ENCODE measurements at regions of chr19 and their contacts with region 1.

Region 1: GRCh38 chr19:46009530-46010510 is 13.0 kb downstream of the PGLYRP1 start:
- DNase-seq: peak; percentile 72 to 83 (median 80)
- ATAC-seq: peak; percentile 97
- H3K4me3 ChIP-seq: no peak overlapping the region
- H3K27ac ChIP-seq: no peak overlapping the region
- H3K4me1 ChIP-seq: peaks cover 3 to 12% of the 10 kb centered on the region in 2 experiments; a peak in 2 of 5 replicates
- H3K27me3 ChIP-seq: no peaks in the 10 kb centered on the region
- CTCF ChIP-seq: peak; percentile 79 to 90 (median 82)
- EP300 ChIP-seq: no peak
- POLR2A ChIP-seq: no peak
- RAD21 ChIP-seq: peak in 1 of 2 experiments; percentile 54; a peak in 2 of 4 replicates

Region 2: DNA sequence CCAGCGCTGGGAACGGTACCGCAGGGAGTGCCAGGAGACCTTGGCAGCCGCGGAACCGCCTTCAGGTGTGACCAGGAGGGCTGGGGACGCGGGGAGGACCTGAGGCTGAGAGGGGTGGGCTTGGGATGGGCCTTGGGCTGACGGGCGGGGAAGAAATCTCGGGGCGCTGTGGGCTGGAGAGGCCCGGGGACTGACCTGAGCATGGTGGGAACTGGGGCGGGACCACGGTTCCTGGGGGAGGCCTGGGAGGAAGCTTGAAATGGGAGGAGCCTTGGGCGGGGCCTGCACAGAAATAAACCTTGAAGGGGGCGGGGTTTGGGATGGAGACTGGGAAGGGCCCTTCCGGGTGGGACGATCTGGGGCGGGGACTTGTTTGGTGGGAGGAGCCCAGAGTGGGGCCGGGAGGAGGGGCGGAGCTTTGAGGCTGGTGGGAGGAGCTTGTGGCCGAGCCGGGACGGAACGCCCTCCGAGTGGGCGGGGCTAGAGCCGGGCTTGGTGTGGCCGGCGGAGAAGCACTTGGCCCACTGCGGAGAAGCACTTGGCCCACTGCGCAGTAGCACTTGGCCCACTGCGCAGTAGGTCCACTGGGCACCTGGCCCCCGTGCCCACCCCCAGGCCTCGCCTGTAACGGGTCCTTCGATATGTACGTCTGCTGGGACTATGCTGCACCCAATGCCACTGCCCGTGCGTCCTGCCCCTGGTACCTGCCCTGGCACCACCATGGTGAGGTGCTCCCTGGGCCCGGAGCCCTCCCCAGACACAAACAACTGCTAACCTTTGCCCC is 339.0 kb before region 1 on chr19:
- CTCF ChIA-PET with region 1: no interaction called
- POLR2A ChIA-PET with region 1: no interaction called
- in situ Hi-C with region 1: no loop called
- intact Hi-C with region 1: no loop called
- DNase-seq: peak; percentile 98 to 100 (median 100)
- ATAC-seq: peak; percentile 84
- H3K4me3 ChIP-seq: peak overlapping the region; percentile 58
- H3K27ac ChIP-seq: peak overlapping the region; percentile 92; the same call in 2 of the 3 replicates
- H3K4me1 ChIP-seq: peaks cover 16 to 40% of the 10 kb centered on the region in 2 experiments; a peak in 4 of 5 replicates
- H3K27me3 ChIP-seq: no peaks in the 10 kb centered on the region
- CTCF ChIP-seq: no peak
- EP300 ChIP-seq: no peak
- POLR2A ChIP-seq: no peak; the same call in 1 of the 2 replicates
- RAD21 ChIP-seq: no peak

Region 3: GRCh38 chr19:45809643-45810159 is 200.1 kb before region 1 on chr19:
- CTCF ChIA-PET with region 1: no interaction called
- POLR2A ChIA-PET with region 1: no interaction called
- in situ Hi-C with region 1: loop called (anchors 10 kb)
- intact Hi-C with region 1: no loop called
- DNase-seq: peak; percentile 48 to 71 (median 52)
- ATAC-seq: peak; percentile 72
- H3K4me3 ChIP-seq: no peak overlapping the region
- H3K27ac ChIP-seq: peak overlapping the region; percentile 96
- H3K4me1 ChIP-seq: peaks cover 13 to 18% of the 10 kb centered on the region in 2 experiments; a peak in 4 of 5 replicates
- H3K27me3 ChIP-seq: no peaks in the 10 kb centered on the region
- CTCF ChIP-seq: no peak
- EP300 ChIP-seq: peak; percentile 57
- POLR2A ChIP-seq: no peak
- RAD21 ChIP-seq: no peak

Region 4: DNA sequence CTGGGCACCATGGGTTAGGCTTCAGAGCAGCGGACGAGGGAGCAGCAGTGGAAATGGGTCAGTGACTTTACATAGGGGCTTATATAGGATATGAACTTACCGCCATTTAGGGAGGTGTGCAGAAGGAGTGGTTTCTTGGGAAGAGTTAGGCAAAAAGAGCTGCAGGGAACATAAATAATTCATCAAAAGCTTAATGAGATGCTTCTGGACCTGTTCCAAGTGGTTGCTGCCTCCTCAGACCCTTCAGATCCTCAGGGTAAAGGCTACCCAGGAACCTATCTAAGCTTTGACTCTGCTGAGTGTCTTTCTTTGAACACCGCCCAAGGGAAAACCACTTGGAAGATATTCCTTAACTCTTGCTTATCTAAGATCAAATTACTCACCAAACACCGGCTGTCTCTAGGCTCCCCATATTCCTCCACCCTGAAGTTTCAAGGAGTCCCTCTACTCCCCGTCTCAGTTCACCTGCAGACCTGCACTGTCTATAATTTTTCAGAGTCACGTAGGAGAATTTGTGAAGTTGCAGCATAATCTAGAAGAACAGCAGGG is 31.2 kb after region 1 on chr19 and contains the start of gene IGFL4:
- CTCF ChIA-PET with region 1: no interaction called
- POLR2A ChIA-PET with region 1: no interaction called
- in situ Hi-C with region 1: no loop called
- intact Hi-C with region 1: no loop called
- DNase-seq: peak in 1 of 4 experiments; percentile 14
- ATAC-seq: no peak
- H3K4me3 ChIP-seq: no peak within 1 kb of the TSS
- H3K27ac ChIP-seq: no peak within 1 kb of the TSS
- H3K4me1 ChIP-seq: peaks cover 0 to 8% of the 10 kb centered on the region in 2 experiments; a peak in 1 of 5 replicates
- H3K27me3 ChIP-seq: peaks cover 10 to 39% of the 10 kb centered on the region in 2 experiments
- CTCF ChIP-seq: no peak
- EP300 ChIP-seq: no peak
- POLR2A ChIP-seq: no peak
- RAD21 ChIP-seq: no peak
- polyA plus RNA-seq, gene IGFL4: not detected